Endothelial cell of umbilical vein (primary cell): ENCODE measurements at regions of chr2 and their contacts with region 1.

Region 1: GRCh38 chr2:64767670-64768468 is 114.2 kb upstream of the SERTAD2 start:
- DNase-seq: peak; percentile 87
- H3K4me3 ChIP-seq: peak overlapping the region; percentile 57 to 80 (median 75)
- H3K27ac ChIP-seq: peak overlapping the region; percentile 87
- H3K4me1 ChIP-seq: peaks cover 12% of the 10 kb centered on the region
- H3K27me3 ChIP-seq: no peaks in the 10 kb centered on the region
- CTCF ChIP-seq: no peak
- POLR2A ChIP-seq: peak; percentile 76

Region 2: DNA sequence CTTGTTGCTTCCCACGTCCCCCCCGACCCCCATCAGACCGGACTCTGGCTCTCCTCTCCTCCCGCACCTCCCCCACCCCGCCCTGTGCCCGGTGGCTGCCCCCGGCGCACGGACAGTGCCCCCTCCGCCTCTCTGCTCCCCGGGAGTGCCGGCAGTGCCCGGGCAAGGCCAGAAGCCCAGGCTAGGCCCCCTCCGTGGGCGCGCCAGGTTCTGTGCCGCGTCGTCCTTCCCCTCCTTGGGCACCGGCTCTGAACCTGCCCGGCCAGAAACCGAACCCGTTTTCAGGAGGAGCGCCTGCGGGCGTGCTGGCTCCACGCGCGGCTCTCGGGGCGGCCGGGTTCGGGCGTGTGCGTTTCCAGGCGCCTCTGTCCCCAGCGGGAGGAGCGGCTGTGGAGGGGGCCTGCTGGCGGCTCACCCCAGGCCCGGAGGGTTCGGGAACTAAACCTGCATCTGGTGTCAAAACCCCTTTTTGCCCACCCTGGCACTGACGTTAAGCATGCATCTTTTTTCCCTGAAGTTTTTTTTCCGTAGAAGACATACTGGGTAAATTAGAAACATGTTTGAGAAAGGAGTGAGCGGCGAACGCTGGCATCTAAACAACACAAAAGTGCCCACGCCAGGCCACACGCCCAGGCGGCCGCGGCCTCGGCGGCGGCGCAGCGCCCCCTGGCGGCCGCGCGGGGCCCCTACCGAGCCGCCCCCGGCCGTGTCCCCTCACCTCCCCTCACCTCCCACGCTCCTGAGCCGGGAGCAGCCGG is 97.4 kb after region 1 on chr2:
- CTCF ChIA-PET with region 1: interaction called, 4 read pairs
- POLR2A ChIA-PET with region 1: no interaction called
- dilution Hi-C with region 1: no loop called
- intact Hi-C with region 1: loop called (anchors 1 kb)
- DNase-seq: peak; percentile 71
- H3K4me3 ChIP-seq: peak overlapping the region; percentile 42 to 46 (median 44)
- H3K27ac ChIP-seq: peak overlapping the region; percentile 66
- H3K4me1 ChIP-seq: peaks cover 6% of the 10 kb centered on the region
- H3K27me3 ChIP-seq: no peaks in the 10 kb centered on the region
- CTCF ChIP-seq: peak; percentile 43 to 94
- POLR2A ChIP-seq: no peak

Region 3: GRCh38 chr2:64904413-64905329 is 136.8 kb after region 1 on chr2:
- CTCF ChIA-PET with region 1: no interaction called
- POLR2A ChIA-PET with region 1: no interaction called
- dilution Hi-C with region 1: no loop called
- intact Hi-C with region 1: no loop called
- DNase-seq: peak; percentile 46
- H3K4me3 ChIP-seq: no peak overlapping the region
- H3K27ac ChIP-seq: no peak overlapping the region
- H3K4me1 ChIP-seq: no peaks in the 10 kb centered on the region
- H3K27me3 ChIP-seq: peaks cover 17 to 29% of the 10 kb centered on the region in 2 experiments
- CTCF ChIP-seq: no peak
- POLR2A ChIP-seq: no peak